ENCODE measurements at regions of chr12 and their contacts with region 1.

Region 1: DNA sequence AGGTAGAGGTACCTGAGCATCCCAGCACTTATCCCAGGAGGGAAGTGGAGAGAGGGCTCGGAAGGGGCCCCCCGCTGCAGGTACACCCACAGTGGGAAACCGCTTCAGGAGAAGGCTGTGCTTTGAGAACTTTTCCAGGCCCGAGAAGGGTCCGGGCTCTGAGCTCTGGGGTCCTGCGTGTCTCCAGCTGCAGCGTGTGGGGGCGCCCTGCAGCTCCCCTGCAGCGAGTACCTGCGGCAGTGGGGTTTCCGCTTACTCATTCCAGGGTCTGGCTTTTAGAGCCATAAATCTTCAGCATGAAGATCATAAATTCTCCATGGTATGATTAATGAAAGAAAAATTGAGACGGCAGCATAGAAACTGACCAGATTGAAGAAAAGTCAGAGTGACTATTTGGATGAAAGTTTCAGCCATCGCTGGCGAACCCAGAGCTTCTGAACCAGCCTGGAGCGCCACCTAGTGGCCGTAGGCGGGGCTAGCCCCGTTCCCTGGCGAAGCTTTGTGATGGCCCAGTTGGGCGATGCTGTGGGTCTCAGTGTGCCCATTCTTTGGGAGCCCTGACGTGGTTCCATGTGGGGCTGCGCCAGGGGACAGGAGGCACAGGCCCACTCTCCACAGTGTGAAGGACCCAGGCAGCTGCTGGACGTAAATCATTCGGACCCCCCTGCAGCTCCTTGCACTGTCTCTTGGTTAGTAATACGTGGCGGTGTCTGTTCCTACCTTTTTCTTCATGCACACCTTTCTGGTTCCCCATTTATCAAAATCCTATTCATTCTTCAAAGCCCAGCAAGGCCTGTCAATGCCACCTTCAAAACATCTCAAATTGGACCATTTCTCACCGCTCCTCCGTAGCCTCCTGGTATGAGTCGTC is 198.2 kb downstream of the TSPAN9 start:
- DNase-seq: peak; percentile 10 to 77 (median 54)
- ATAC-seq: peak; percentile 52 to 71 (median 70)
- H3K4me3 ChIP-seq: no peak overlapping the region
- H3K4me3 Mint-ChIP-seq: no peak overlapping the region
- H3K27ac ChIP-seq: no peak overlapping the region
- H3K27ac Mint-ChIP-seq: no peak overlapping the region
- H3K4me1 ChIP-seq: peaks cover 0 to 6% of the 10 kb centered on the region in 2 experiments
- H3K4me1 Mint-ChIP-seq: peaks cover 3 to 10% (median 3%) of the 10 kb centered on the region in 3 donors
- H3K27me3 ChIP-seq: peaks cover 0 to 44% of the 10 kb centered on the region in 2 experiments
- H3K27me3 Mint-ChIP-seq: peaks cover 8 to 15% of the 10 kb centered on the region in 2 donors

Region 2: DNA sequence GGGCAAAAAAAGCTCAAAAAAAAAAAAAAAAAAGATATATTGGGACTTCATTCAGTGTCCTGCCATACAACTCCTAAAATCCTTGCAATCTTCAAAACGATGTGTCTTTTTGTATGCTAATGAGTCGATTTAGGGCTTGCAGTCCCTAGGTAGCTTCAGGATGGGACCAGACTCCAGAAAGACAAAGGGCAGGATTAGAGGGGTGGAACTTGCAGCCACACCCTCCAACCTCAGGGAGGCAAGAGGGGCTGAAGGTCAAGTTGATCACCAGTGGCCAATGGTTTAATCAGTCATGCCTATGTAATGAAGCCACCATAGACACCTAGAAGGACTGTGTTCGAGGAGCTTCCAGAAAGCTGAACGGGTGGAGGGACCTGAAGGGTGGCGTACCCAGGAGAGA is 286.9 kb before region 1 on chr12:
- CTCF ChIA-PET with region 1: interaction called in 1 of 2 experiments, 10 read pairs
- POLR2A ChIA-PET with region 1: no interaction called
- DNase-seq: no peak
- ATAC-seq: no peak
- H3K4me3 ChIP-seq: no peak overlapping the region
- H3K4me3 Mint-ChIP-seq: no peak overlapping the region
- H3K27ac ChIP-seq: no peak overlapping the region
- H3K27ac Mint-ChIP-seq: no peak overlapping the region
- H3K4me1 ChIP-seq: no peaks in the 10 kb centered on the region
- H3K4me1 Mint-ChIP-seq: no peaks in the 10 kb centered on the region
- H3K27me3 ChIP-seq: peaks cover 0 to 4% of the 10 kb centered on the region in 2 experiments
- H3K27me3 Mint-ChIP-seq: peaks cover 0 to 9% of the 10 kb centered on the region in 2 donors

Region 3: GRCh38 chr12:3073438-3074250 is 201.8 kb before region 1 on chr12:
- CTCF ChIA-PET with region 1: interaction called, 4 to 13 read pairs
- POLR2A ChIA-PET with region 1: no interaction called
- DNase-seq: peak; percentile 51 to 90 (median 76)
- ATAC-seq: peak; percentile 38 to 53 (median 43)
- H3K4me3 ChIP-seq: no peak overlapping the region
- H3K4me3 Mint-ChIP-seq: no peak overlapping the region
- H3K27ac ChIP-seq: no peak overlapping the region
- H3K27ac Mint-ChIP-seq: no peak overlapping the region
- H3K4me1 ChIP-seq: peaks cover 0 to 23% of the 10 kb centered on the region in 2 experiments
- H3K4me1 Mint-ChIP-seq: peaks cover 0 to 20% (median 12%) of the 10 kb centered on the region in 3 donors
- H3K27me3 ChIP-seq: peaks cover 8 to 27% of the 10 kb centered on the region in 2 experiments
- H3K27me3 Mint-ChIP-seq: peaks cover 3 to 13% of the 10 kb centered on the region in 2 donors

Region 4: GRCh38 chr12:3083921-3084347 is 191.5 kb before region 1 on chr12:
- CTCF ChIA-PET with region 1: no interaction called
- POLR2A ChIA-PET with region 1: no interaction called
- DNase-seq: no peak
- ATAC-seq: no peak
- H3K4me3 ChIP-seq: no peak overlapping the region
- H3K4me3 Mint-ChIP-seq: no peak overlapping the region
- H3K27ac ChIP-seq: no peak overlapping the region
- H3K27ac Mint-ChIP-seq: no peak overlapping the region
- H3K4me1 ChIP-seq: no peaks in the 10 kb centered on the region
- H3K4me1 Mint-ChIP-seq: peaks cover 0 to 8% (median 5%) of the 10 kb centered on the region in 3 donors
- H3K27me3 ChIP-seq: peaks cover 0 to 4% of the 10 kb centered on the region in 2 experiments
- H3K27me3 Mint-ChIP-seq: peaks cover 0 to 3% of the 10 kb centered on the region in 2 donors

Region 5: DNA sequence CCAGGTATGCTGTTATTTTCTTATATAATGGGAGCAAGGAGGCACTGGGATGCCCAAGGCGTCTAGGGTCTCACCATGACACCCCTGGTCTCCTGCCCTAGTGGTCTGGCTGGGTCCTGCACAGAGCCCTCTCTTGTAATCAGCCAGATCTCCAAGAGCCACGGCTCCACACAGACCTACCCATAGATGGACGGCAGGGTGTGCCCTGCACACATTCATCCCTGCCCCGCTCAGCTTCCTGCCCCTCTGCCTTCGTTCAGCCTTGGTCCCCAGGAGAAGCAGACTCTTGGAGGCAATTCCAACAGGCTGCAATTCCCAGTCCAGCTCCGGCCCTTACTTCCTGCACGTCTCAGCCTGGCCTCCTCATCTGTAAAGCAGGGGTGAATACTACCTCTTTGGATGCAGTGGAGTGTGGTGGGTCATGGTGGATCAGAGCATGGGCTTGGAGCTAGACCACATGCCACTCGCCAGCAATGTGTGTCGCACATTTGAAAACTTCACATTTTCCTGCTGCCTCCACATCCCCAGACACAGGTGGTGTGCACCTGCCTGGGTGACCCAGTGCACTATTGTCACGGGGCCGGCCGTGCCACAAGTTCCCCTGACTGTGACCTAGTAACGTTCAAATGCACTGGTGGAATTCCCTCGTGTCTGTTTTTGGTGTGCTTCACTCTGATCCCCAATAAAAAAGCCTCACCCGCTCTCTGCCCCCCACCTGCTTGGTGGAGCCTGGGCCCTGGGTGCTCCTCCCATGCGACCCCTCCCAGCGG is 44.5 kb after region 1 on chr12:
- CTCF ChIA-PET with region 1: no interaction called
- POLR2A ChIA-PET with region 1: no interaction called
- DNase-seq: no peak
- ATAC-seq: no peak
- H3K4me3 ChIP-seq: no peak overlapping the region
- H3K4me3 Mint-ChIP-seq: no peak overlapping the region
- H3K27ac ChIP-seq: no peak overlapping the region
- H3K27ac Mint-ChIP-seq: no peak overlapping the region
- H3K4me1 ChIP-seq: no peaks in the 10 kb centered on the region
- H3K4me1 Mint-ChIP-seq: no peaks in the 10 kb centered on the region
- H3K27me3 ChIP-seq: peaks cover 0 to 24% of the 10 kb centered on the region in 2 experiments
- H3K27me3 Mint-ChIP-seq: peaks cover 8 to 11% of the 10 kb centered on the region in 2 donors

Measured in T-cell (primary cell).